T-cell (primary cell): ENCODE measurements at regions of chr6 and their contacts with region 1.

Region 1: GRCh38 chr6:149190224-149190831 is 127.2 kb upstream of the TAB2 start:
- DNase-seq: peak in 34 of 35 experiments; percentile 6 to 58 (median 36)
- ATAC-seq: peak in 2 of 4 experiments; percentile 54 to 62
- H3K4me3 ChIP-seq: no peak overlapping the region
- H3K4me3 Mint-ChIP-seq: no peak overlapping the region
- H3K27ac ChIP-seq: no peak overlapping the region
- H3K27ac Mint-ChIP-seq: peak overlapping the region; percentile 28 to 62
- H3K4me1 ChIP-seq: peaks cover 0 to 10% of the 10 kb centered on the region in 2 experiments
- H3K4me1 Mint-ChIP-seq: peaks cover 17 to 35% (median 22%) of the 10 kb centered on the region in 3 donors
- H3K27me3 ChIP-seq: no peaks in the 10 kb centered on the region
- H3K27me3 Mint-ChIP-seq: no peaks in the 10 kb centered on the region

Region 2: GRCh38 chr6:147738838-147739162 is 1451.5 kb before region 1 on chr6:
- CTCF ChIA-PET with region 1: no interaction called
- POLR2A ChIA-PET with region 1: no interaction called
- DNase-seq: no peak
- ATAC-seq: no peak
- H3K4me3 ChIP-seq: no peak overlapping the region
- H3K4me3 Mint-ChIP-seq: no peak overlapping the region
- H3K27ac ChIP-seq: no peak overlapping the region
- H3K27ac Mint-ChIP-seq: no peak overlapping the region
- H3K4me1 ChIP-seq: no peaks in the 10 kb centered on the region
- H3K4me1 Mint-ChIP-seq: no peaks in the 10 kb centered on the region
- H3K27me3 ChIP-seq: no peaks in the 10 kb centered on the region
- H3K27me3 Mint-ChIP-seq: peaks cover 0 to 7% of the 10 kb centered on the region in 2 donors

Region 3: GRCh38 chr6:148846778-148847761 is 343.3 kb before region 1 on chr6:
- CTCF ChIA-PET with region 1: no interaction called
- POLR2A ChIA-PET with region 1: no interaction called
- DNase-seq: no peak
- ATAC-seq: no peak
- H3K4me3 ChIP-seq: no peak overlapping the region
- H3K4me3 Mint-ChIP-seq: no peak overlapping the region
- H3K27ac ChIP-seq: no peak overlapping the region
- H3K27ac Mint-ChIP-seq: no peak overlapping the region
- H3K4me1 ChIP-seq: no peaks in the 10 kb centered on the region
- H3K4me1 Mint-ChIP-seq: peaks cover 0 to 7% (median 0%) of the 10 kb centered on the region in 3 donors
- H3K27me3 ChIP-seq: no peaks in the 10 kb centered on the region
- H3K27me3 Mint-ChIP-seq: no peaks in the 10 kb centered on the region

Region 4: GRCh38 chr6:148857798-148858390 is 332.4 kb before region 1 on chr6:
- CTCF ChIA-PET with region 1: no interaction called
- POLR2A ChIA-PET with region 1: no interaction called
- DNase-seq: no peak
- ATAC-seq: no peak
- H3K4me3 ChIP-seq: no peak overlapping the region
- H3K4me3 Mint-ChIP-seq: no peak overlapping the region
- H3K27ac ChIP-seq: no peak overlapping the region
- H3K27ac Mint-ChIP-seq: no peak overlapping the region
- H3K4me1 ChIP-seq: peaks cover 0 to 5% of the 10 kb centered on the region in 2 experiments
- H3K4me1 Mint-ChIP-seq: peaks cover 0 to 31% (median 6%) of the 10 kb centered on the region in 3 donors
- H3K27me3 ChIP-seq: no peaks in the 10 kb centered on the region
- H3K27me3 Mint-ChIP-seq: peaks cover 0 to 9% of the 10 kb centered on the region in 2 donors

Region 5: GRCh38 chr6:149170564-149171452 is 19.5 kb before region 1 on chr6:
- CTCF ChIA-PET with region 1: no interaction called
- POLR2A ChIA-PET with region 1: no interaction called
- DNase-seq: no peak
- ATAC-seq: no peak
- H3K4me3 ChIP-seq: no peak overlapping the region
- H3K4me3 Mint-ChIP-seq: no peak overlapping the region
- H3K27ac ChIP-seq: no peak overlapping the region
- H3K27ac Mint-ChIP-seq: peak overlapping the region; percentile 21 to 68
- H3K4me1 ChIP-seq: peaks cover 7 to 31% of the 10 kb centered on the region in 2 experiments
- H3K4me1 Mint-ChIP-seq: peaks cover 47 to 77% (median 58%) of the 10 kb centered on the region in 3 donors
- H3K27me3 ChIP-seq: peaks cover 0 to 3% of the 10 kb centered on the region in 2 experiments
- H3K27me3 Mint-ChIP-seq: no peaks in the 10 kb centered on the region

Region 6: GRCh38 chr6:149202100-149202499 is 11.8 kb after region 1 on chr6:
- CTCF ChIA-PET with region 1: no interaction called
- POLR2A ChIA-PET with region 1: interaction called in 1 of 2 experiments, 10 read pairs
- DNase-seq: no peak
- ATAC-seq: no peak
- H3K4me3 ChIP-seq: no peak overlapping the region
- H3K4me3 Mint-ChIP-seq: no peak overlapping the region
- H3K27ac ChIP-seq: no peak overlapping the region
- H3K27ac Mint-ChIP-seq: no peak overlapping the region
- H3K4me1 ChIP-seq: no peaks in the 10 kb centered on the region
- H3K4me1 Mint-ChIP-seq: peaks cover 6 to 20% (median 20%) of the 10 kb centered on the region in 3 donors
- H3K27me3 ChIP-seq: no peaks in the 10 kb centered on the region
- H3K27me3 Mint-ChIP-seq: no peaks in the 10 kb centered on the region